CD8-positive, alpha-beta T cell (primary cell): ENCODE measurements at regions of chr6 and their contacts with region 1.

Region 1: DNA sequence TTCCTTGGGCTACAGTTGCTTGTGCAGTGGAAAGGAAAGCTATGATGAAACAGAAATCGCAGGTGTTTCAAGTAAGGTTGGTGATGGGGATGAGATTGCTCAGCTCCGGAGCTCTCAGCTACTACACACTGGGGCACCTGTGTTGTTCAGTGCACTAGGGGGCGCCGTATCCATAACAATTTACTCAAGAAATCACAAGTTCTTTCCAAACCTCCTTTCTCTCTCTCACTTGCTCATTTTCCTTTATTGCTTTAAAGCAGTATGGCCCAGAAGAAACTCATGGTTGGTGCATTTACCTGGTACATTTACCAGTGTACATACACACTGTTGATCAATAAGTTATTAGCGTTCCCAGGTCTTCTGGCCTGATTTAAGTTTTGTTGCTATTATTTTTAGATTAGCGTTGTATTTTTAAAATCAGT is 235.2 kb upstream of the TAB2 start:
- DNase-seq: peak; percentile 70 to 90 (median 84)
- ATAC-seq: peak; percentile 91
- H3K4me3 ChIP-seq: no peak overlapping the region
- H3K4me3 Mint-ChIP-seq: no peak overlapping the region
- H3K27ac ChIP-seq: no peak overlapping the region
- H3K27ac Mint-ChIP-seq: peak overlapping the region; percentile 49
- H3K4me1 ChIP-seq: peaks cover 21% of the 10 kb centered on the region
- H3K4me1 Mint-ChIP-seq: peaks cover 30% of the 10 kb centered on the region
- H3K27me3 ChIP-seq: no peaks in the 10 kb centered on the region
- H3K27me3 Mint-ChIP-seq: no peaks in the 10 kb centered on the region
- CTCF ChIP-seq: peak; percentile 87

Region 2: GRCh38 chr6:149028767-149029405 is 53.4 kb before region 1 on chr6:
- CTCF ChIA-PET with region 1: interaction called, 10 read pairs
- POLR2A ChIA-PET with region 1: interaction called, 3 read pairs
- intact Hi-C with region 1: loop called (anchors 1 kb)
- DNase-seq: peak; percentile 16 to 88 (median 68)
- ATAC-seq: peak; percentile 70
- H3K4me3 ChIP-seq: no peak overlapping the region
- H3K4me3 Mint-ChIP-seq: no peak overlapping the region
- H3K27ac ChIP-seq: no peak overlapping the region
- H3K27ac Mint-ChIP-seq: no peak overlapping the region
- H3K4me1 ChIP-seq: no peaks in the 10 kb centered on the region
- H3K4me1 Mint-ChIP-seq: peaks cover 25% of the 10 kb centered on the region
- H3K27me3 ChIP-seq: no peaks in the 10 kb centered on the region
- H3K27me3 Mint-ChIP-seq: no peaks in the 10 kb centered on the region
- CTCF ChIP-seq: peak; percentile 91

Region 3: DNA sequence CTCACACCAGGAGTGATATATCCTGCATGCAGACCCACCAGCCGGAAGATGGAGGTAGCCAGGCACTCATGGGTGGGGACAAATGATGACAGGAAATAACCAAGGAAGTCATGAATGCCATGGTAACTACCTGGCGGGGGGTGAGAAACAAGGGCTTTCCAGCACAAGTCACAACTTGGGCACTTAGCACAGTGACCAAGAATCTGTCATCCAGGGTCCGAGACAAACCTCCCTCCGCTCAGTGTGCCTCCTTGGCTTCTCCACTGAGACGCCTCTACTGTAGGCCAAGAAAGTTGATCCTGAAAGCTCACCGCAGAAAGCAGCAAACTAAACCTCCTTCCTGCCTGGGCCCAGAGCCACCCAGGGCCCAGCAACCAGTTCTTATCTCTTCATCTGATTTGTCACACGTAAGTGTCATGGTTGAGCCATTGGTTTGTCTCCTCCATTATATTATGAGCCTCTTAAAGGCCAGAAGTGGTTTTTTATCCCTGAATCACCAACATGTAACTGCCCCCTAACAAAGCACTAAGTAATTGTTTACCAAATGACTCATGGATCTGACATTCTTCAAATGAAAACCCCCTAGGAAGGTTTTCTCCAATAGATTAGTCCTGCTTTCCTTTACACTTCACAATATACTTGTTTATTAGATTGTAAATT is 150.9 kb after region 1 on chr6:
- CTCF ChIA-PET with region 1: interaction called, 3 read pairs
- POLR2A ChIA-PET with region 1: no interaction called
- intact Hi-C with region 1: loop called in 1 of 2 experiments (anchors 1 kb)
- DNase-seq: peak in 7 of 9 experiments; percentile 26 to 65 (median 47)
- ATAC-seq: peak; percentile 54
- H3K4me3 ChIP-seq: peak overlapping the region in 1 of 2 experiments; percentile 17
- H3K4me3 Mint-ChIP-seq: peak overlapping the region; percentile 38
- H3K27ac ChIP-seq: peak overlapping the region; percentile 31 to 45
- H3K27ac Mint-ChIP-seq: peak overlapping the region; percentile 93
- H3K4me1 ChIP-seq: peaks cover 41% of the 10 kb centered on the region
- H3K4me1 Mint-ChIP-seq: peaks cover 43% of the 10 kb centered on the region
- H3K27me3 ChIP-seq: no peaks in the 10 kb centered on the region
- H3K27me3 Mint-ChIP-seq: no peaks in the 10 kb centered on the region
- CTCF ChIP-seq: no peak

Region 4: GRCh38 chr6:149316798-149317655 is 234.7 kb after region 1 on chr6:
- CTCF ChIA-PET with region 1: interaction called, 3 read pairs
- POLR2A ChIA-PET with region 1: interaction called, 4 read pairs
- intact Hi-C with region 1: loop called (anchors 2 to 5 kb)
- DNase-seq: peak; percentile 77 to 96 (median 87)
- ATAC-seq: peak; percentile 70
- H3K4me3 ChIP-seq: peak overlapping the region; percentile 71 to 78
- H3K4me3 Mint-ChIP-seq: peak overlapping the region; percentile 89
- H3K27ac ChIP-seq: peak overlapping the region; percentile 75 to 87
- H3K27ac Mint-ChIP-seq: peak overlapping the region; percentile 88
- H3K4me1 ChIP-seq: peaks cover 32% of the 10 kb centered on the region
- H3K4me1 Mint-ChIP-seq: peaks cover 39% of the 10 kb centered on the region
- H3K27me3 ChIP-seq: no peaks in the 10 kb centered on the region
- H3K27me3 Mint-ChIP-seq: no peaks in the 10 kb centered on the region
- CTCF ChIP-seq: no peak

Region 5: DNA sequence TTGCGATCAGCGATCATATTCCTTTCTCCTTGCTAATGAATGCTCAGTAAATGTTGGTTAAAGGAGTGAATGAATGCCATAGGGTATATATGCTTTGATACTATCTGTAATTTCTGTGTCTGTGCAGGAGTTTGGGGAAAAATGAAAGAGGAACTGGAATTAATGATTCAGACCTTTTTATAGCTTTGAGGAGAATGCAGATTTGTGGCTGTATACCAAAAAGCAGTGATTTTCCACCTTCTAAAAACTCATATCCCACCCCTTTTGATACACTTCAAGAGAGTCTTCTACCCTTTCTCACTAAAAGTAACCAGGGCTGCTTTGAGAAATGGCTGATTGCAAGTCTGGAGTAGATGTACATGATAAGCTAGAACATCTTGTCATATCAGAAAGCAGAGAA is 291.2 kb after region 1 on chr6:
- CTCF ChIA-PET with region 1: no interaction called
- POLR2A ChIA-PET with region 1: no interaction called
- intact Hi-C with region 1: loop called in 1 of 2 experiments (anchors 5 kb)
- DNase-seq: no peak
- ATAC-seq: no peak
- H3K4me3 ChIP-seq: no peak overlapping the region
- H3K4me3 Mint-ChIP-seq: no peak overlapping the region
- H3K27ac ChIP-seq: no peak overlapping the region
- H3K27ac Mint-ChIP-seq: no peak overlapping the region
- H3K4me1 ChIP-seq: peaks cover 35% of the 10 kb centered on the region
- H3K4me1 Mint-ChIP-seq: peaks cover 52% of the 10 kb centered on the region
- H3K27me3 ChIP-seq: no peaks in the 10 kb centered on the region
- H3K27me3 Mint-ChIP-seq: no peaks in the 10 kb centered on the region
- CTCF ChIP-seq: no peak

Region 6: GRCh38 chr6:149484733-149485700 is 402.7 kb after region 1 on chr6 and contains the start of gene ZC3H12D:
- CTCF ChIA-PET with region 1: no interaction called
- POLR2A ChIA-PET with region 1: no interaction called
- intact Hi-C with region 1: loop called in 1 of 2 experiments (anchors 1 kb)
- DNase-seq: peak; percentile 65 to 93 (median 82)
- ATAC-seq: peak; percentile 80
- H3K4me3 ChIP-seq: peak within 1 kb of the TSS; percentile 45 to 55
- H3K4me3 Mint-ChIP-seq: peak within 1 kb of the TSS; percentile 86
- H3K27ac ChIP-seq: peak within 1 kb of the TSS; percentile 69 to 92
- H3K27ac Mint-ChIP-seq: peak within 1 kb of the TSS; percentile 95
- H3K4me1 ChIP-seq: peaks cover 43% of the 10 kb centered on the region
- H3K4me1 Mint-ChIP-seq: peaks cover 63% of the 10 kb centered on the region
- H3K27me3 ChIP-seq: no peaks in the 10 kb centered on the region
- H3K27me3 Mint-ChIP-seq: no peaks in the 10 kb centered on the region
- CTCF ChIP-seq: peak; percentile 66
- total RNA-seq, gene ZC3H12D: 45.9 to 50.0 TPM

Region 7: GRCh38 chr6:150928882-150929281 is 1846.6 kb after region 1 on chr6:
- CTCF ChIA-PET with region 1: no interaction called
- POLR2A ChIA-PET with region 1: no interaction called
- intact Hi-C with region 1: no loop called
- DNase-seq: no peak
- ATAC-seq: no peak
- H3K4me3 ChIP-seq: no peak overlapping the region
- H3K4me3 Mint-ChIP-seq: no peak overlapping the region
- H3K27ac ChIP-seq: no peak overlapping the region
- H3K27ac Mint-ChIP-seq: no peak overlapping the region
- H3K4me1 ChIP-seq: no peaks in the 10 kb centered on the region
- H3K4me1 Mint-ChIP-seq: no peaks in the 10 kb centered on the region
- H3K27me3 ChIP-seq: no peaks in the 10 kb centered on the region
- H3K27me3 Mint-ChIP-seq: no peaks in the 10 kb centered on the region
- CTCF ChIP-seq: no peak